Activated CD4-positive, alpha-beta T cell treated with anti-CD3 and anti-CD28 coated beads for 36 hours (primary cell): ENCODE measurements at regions of chr3 and their contacts with region 1.

Region 1: GRCh38 chr3:101849051-101849720 is at the start of gene NFKBIZ:
- DNase-seq: peak; percentile 96
- ATAC-seq: peak; percentile 70
- H3K4me3 Mint-ChIP-seq: peak within 1 kb of the TSS; percentile 98
- H3K27ac Mint-ChIP-seq: peak within 1 kb of the TSS; percentile 100
- H3K4me1 Mint-ChIP-seq: peaks cover 46% of the 10 kb centered on the region
- H3K27me3 Mint-ChIP-seq: no peaks in the 10 kb centered on the region
- total RNA-seq, gene NFKBIZ: 47.8 to 56.7 TPM

Region 2: DNA sequence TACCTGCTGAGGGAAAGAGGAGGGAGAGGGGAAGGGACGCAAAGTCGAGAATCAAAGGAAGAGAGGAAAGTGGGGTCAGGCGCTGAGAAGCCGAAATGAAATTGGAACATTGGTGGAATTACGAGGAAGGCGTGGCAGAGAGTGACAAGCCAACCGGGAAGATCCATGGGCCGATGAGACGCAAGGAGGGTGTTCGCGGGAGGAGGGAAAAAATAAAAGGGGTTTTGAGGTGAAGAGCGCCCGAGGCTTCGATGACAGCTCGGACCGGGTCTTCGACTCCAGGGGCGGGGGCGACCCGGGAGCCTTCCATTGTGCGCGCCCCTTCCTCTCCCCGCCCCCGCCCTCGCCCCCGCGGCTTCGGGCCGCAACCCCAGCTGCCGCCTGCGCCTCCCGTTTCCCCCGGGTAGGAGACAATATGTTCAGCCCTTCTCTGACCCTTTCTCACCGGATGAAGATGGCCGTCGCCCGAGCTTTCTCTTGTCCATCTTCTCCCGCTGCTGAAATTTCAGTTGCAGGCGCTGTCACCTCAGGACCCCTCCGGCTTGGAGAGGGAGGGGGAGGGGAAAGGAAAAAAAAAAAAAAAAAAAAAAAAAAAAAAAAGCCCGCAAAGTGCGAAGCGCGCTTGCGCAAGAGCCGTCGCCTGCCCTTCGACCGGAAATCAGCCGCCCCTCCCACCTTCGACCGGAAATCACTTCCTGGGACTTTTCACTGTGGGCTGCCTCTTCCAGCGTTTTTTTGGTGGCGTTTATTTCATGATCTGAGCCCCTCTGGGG is 336.4 kb before region 1 on chr3 and contains the start of gene SENP7:
- CTCF ChIA-PET with region 1: no interaction called
- POLR2A ChIA-PET with region 1: no interaction called
- intact Hi-C with region 1: loop called in 1 of 2 experiments (anchors 10 kb)
- DNase-seq: peak; percentile 88
- ATAC-seq: peak; percentile 49
- H3K4me3 Mint-ChIP-seq: peak within 1 kb of the TSS; percentile 85
- H3K27ac Mint-ChIP-seq: peak within 1 kb of the TSS; percentile 96
- H3K4me1 Mint-ChIP-seq: peaks cover 53% of the 10 kb centered on the region
- H3K27me3 Mint-ChIP-seq: no peaks in the 10 kb centered on the region
- total RNA-seq, gene SENP7: 12.3 to 12.9 TPM

Region 3: DNA sequence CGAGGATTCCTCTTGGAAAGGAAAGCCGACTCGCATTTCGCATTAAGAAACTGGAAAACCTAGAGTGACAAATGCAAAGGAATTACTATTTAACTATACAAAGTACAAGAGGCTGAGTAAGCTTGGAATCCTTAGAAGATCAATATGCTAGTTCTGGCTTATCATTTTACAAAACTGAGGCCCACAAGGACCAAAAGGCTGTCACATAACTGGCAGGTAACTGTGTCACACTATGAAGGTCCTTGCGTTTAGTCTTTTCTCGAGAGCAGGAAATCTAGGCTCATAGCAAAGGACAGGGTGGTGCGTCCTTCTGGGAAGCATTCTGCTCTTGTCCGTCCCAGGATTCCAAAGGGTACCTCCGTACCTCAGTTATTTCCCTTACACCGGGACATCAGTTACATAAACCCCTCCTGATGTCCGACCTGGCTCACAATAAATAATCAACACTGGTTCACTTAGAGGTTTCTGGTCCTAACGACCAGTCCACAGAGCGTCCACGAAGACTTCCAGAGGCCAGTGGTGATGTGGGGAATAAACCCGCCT is 163.2 kb before region 1 on chr3:
- CTCF ChIA-PET with region 1: no interaction called
- POLR2A ChIA-PET with region 1: interaction called, 6 read pairs
- intact Hi-C with region 1: loop called (anchors 2 kb)
- DNase-seq: no peak
- ATAC-seq: no peak
- H3K4me3 Mint-ChIP-seq: peak overlapping the region; percentile 100
- H3K27ac Mint-ChIP-seq: peak overlapping the region; percentile 99
- H3K4me1 Mint-ChIP-seq: peaks cover 45% of the 10 kb centered on the region
- H3K27me3 Mint-ChIP-seq: no peaks in the 10 kb centered on the region

Region 4: GRCh38 chr3:101809178-101810021 is 39.8 kb before region 1 on chr3:
- CTCF ChIA-PET with region 1: interaction called, 4 read pairs
- POLR2A ChIA-PET with region 1: interaction called, 4 read pairs
- intact Hi-C with region 1: loop called (anchors 1 to 5 kb)
- DNase-seq: peak; percentile 45
- ATAC-seq: peak; percentile 53
- H3K4me3 Mint-ChIP-seq: no peak overlapping the region
- H3K27ac Mint-ChIP-seq: peak overlapping the region; percentile 53
- H3K4me1 Mint-ChIP-seq: peaks cover 48% of the 10 kb centered on the region
- H3K27me3 Mint-ChIP-seq: no peaks in the 10 kb centered on the region

Region 5: DNA sequence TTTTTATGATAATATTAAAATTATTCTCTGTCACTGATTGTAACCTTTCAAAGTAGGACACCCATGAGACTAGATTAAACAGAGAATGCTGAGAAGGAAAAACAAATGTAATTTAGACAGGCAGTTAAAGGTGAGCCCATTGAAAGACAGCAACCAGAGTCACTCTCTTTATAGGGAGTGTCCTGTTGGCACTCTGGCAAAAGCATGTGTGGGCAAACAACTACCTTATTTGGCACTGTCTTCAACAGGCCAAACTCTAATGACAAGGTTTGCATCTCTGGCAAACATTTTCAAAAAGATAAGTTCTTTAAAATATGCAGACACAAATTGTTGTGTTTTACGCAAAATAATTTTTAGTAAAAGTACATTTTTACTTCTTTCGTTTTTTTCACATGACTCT is 29.9 kb after region 1 on chr3:
- CTCF ChIA-PET with region 1: no interaction called
- POLR2A ChIA-PET with region 1: no interaction called
- intact Hi-C with region 1: no loop called
- DNase-seq: no peak
- ATAC-seq: no peak
- H3K4me3 Mint-ChIP-seq: no peak overlapping the region
- H3K27ac Mint-ChIP-seq: no peak overlapping the region
- H3K4me1 Mint-ChIP-seq: no peaks in the 10 kb centered on the region
- H3K27me3 Mint-ChIP-seq: no peaks in the 10 kb centered on the region

Region 6: DNA sequence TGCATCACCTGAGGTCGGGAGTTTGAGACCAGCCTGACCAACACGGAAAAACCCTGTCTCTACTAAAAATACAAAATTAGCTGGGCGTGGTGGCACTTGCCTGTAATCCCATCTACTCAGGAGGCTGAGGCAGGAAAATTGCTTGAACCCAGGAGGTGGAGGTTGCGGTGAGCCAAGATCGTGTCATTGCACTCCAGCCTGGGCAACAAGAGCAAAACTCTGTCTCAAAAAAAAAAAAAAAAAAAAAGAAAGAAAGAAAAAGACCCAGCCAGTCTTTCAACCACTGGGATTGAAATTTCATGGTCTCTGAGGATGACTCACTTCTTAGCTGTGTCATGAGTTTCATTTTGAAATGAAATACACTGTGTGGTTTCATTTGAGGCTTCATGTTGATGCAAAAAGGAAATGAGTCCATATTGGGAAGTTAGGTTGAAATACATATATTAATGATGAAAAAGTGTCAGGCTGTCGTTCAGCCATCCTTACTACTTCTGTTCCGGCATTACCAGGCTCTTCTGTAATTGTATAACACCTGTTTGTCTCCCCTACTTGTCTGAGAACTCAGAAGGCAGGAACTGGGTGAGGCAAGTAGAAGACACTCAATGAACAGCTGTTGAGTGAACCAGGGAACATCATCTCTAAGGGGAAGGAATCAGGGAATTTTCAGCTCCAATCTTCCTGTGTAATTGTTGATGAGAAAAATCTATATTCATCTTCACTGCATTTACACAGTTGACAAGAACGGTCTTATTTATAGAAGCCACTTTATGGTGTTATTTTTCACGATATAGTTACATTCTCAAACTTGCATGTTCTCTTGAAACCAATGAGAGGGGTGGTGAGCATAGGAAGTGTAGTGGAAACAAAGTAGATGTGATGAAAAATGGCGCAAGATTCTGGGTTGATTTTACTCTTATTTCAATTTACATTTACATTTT is 87.5 kb after region 1 on chr3:
- CTCF ChIA-PET with region 1: interaction called, 5 read pairs
- POLR2A ChIA-PET with region 1: interaction called, 3 read pairs
- intact Hi-C with region 1: loop called (anchors 1 kb)
- DNase-seq: peak; percentile 42
- ATAC-seq: peak; percentile 88
- H3K4me3 Mint-ChIP-seq: no peak overlapping the region
- H3K27ac Mint-ChIP-seq: peak overlapping the region; percentile 77
- H3K4me1 Mint-ChIP-seq: peaks cover 27% of the 10 kb centered on the region
- H3K27me3 Mint-ChIP-seq: peaks cover 8% of the 10 kb centered on the region

Region 7: DNA sequence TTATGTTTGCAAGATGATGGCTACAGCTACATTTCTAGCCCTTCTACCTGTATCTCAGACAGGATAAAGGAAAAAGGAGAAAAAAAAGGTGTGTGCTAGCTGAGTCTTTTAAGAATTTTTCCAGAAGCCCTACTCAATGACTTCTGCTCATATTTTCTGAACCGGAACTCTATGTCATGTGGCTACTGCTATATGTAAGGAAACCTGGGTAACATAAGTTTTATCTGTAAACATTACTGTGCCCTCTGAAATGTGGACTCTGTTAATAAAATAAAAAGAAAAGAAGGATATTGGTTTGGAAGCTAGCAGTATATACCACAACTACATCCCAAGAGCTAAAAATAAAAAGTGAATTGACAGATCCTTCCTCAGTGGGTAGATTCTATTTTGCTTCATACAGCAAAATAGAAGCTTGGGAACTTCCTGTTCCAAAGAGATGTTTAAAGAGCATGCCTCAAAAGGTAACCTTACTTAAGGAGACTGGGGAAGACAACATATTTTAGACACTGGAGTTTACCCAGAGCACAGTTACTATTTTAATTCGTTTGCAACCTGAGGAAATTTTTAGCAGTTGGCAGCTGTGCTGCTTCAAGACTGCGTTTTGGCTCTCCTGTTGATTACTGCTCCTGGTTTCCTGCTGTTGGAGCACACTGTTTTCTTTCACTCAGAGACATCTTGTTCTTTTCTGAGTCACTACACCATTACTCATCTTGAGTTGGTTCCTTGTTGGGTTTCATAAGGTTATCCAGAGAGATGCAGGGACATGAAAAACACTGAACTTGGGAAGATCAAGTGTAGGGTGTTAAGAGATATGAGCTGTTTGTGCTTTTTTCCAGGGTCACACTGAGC is 280.8 kb after region 1 on chr3:
- CTCF ChIA-PET with region 1: no interaction called
- POLR2A ChIA-PET with region 1: no interaction called
- intact Hi-C with region 1: loop called in 1 of 2 experiments (anchors 5 kb)
- DNase-seq: no peak
- ATAC-seq: peak; percentile 94
- H3K4me3 Mint-ChIP-seq: no peak overlapping the region
- H3K27ac Mint-ChIP-seq: peak overlapping the region; percentile 49
- H3K4me1 Mint-ChIP-seq: peaks cover 21% of the 10 kb centered on the region
- H3K27me3 Mint-ChIP-seq: no peaks in the 10 kb centered on the region